GM13976 (cell line): ENCODE measurements at regions of chr17 and their contacts with region 1.

Region 1: GRCh38 chr17:45841883-45842525 is 2.7 kb upstream of the SPPL2C start:
- DNase-seq: no peak
- CTCF ChIP-seq: no peak

Region 2: GRCh38 chr17:45218895-45219661 is 622.9 kb before region 1 on chr17:
- in situ Hi-C with region 1: loop called (anchors 25 kb)
- DNase-seq: peak; percentile 81
- CTCF ChIP-seq: peak; percentile 93

Region 3: GRCh38 chr17:45410144-45411091 is 431.6 kb before region 1 on chr17:
- in situ Hi-C with region 1: loop called (anchors 25 kb)
- DNase-seq: peak; percentile 88
- CTCF ChIP-seq: no peak

Region 4: DNA sequence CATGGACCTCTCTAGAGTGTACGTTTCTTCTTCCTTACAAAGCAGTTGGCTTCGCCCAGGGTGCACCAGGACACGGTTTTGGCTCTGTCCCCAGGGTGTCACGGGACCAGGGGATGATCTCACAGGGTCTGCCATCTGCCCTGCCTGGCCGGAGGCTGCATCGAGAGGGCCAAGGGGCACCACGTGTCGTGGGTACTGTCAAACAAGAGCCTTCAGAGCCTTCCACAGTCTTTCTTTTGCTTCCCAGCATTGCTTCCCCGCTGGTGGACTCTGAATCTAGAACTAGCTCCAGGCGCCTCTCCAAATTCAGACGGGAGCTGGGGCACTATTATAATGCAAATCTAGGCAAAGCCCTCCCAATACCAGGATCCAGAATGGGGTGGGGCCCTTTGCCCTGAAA is 100.3 kb after region 1 on chr17:
- in situ Hi-C with region 1: no loop called
- DNase-seq: no peak
- CTCF ChIP-seq: no peak

Region 5: DNA sequence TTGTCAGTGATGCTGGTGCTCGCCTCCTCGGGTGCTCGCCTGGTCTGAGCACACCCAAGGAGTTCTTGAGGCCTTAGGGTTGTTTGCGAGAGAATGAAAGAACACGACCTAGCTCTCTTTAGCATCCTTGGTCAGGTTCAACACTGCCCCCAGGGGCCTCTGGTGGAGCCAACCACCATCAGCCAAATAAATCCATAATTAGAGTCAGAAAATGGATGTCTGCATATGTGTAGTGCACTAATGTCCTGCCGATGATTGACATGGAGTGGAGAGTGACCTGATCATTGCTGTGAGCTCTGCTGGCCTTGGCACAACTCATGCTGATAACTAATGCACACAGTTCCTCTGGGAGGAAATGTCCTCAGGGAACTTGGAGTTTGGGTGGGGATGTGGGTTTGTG is 148.9 kb after region 1 on chr17:
- in situ Hi-C with region 1: no loop called
- DNase-seq: no peak
- CTCF ChIP-seq: no peak